ENCODE measurements at regions of chr17 and their contacts with region 1.

Region 1: GRCh38 chr17:48492401-48493298 is 38.2 kb downstream of the HOXB1 start:
- DNase-seq: no peak
- H3K4me3 ChIP-seq: peak overlapping the region; percentile 40 to 55 (median 44)
- H3K27ac ChIP-seq: peak overlapping the region; percentile 45 to 63 (median 52)
- H3K4me1 ChIP-seq: peaks cover 12 to 29% (median 18%) of the 10 kb centered on the region in 4 donors
- H3K27me3 ChIP-seq: no peaks in the 10 kb centered on the region
- CTCF ChIP-seq: peak in 2 of 3 experiments; percentile 92 to 95
- EP300 ChIP-seq: no peak
- POLR2A ChIP-seq: no peak

Region 2: GRCh38 chr17:48244121-48244711 is 248.4 kb before region 1 on chr17:
- intact Hi-C with region 1: no loop called
- DNase-seq: no peak
- H3K4me3 ChIP-seq: no peak overlapping the region
- H3K27ac ChIP-seq: no peak overlapping the region
- H3K4me1 ChIP-seq: peaks cover 23 to 26% (median 24%) of the 10 kb centered on the region in 4 donors
- H3K27me3 ChIP-seq: peaks cover 0 to 16% (median 2%) of the 10 kb centered on the region in 4 donors
- CTCF ChIP-seq: no peak
- EP300 ChIP-seq: no peak
- POLR2A ChIP-seq: no peak

Region 3: DNA sequence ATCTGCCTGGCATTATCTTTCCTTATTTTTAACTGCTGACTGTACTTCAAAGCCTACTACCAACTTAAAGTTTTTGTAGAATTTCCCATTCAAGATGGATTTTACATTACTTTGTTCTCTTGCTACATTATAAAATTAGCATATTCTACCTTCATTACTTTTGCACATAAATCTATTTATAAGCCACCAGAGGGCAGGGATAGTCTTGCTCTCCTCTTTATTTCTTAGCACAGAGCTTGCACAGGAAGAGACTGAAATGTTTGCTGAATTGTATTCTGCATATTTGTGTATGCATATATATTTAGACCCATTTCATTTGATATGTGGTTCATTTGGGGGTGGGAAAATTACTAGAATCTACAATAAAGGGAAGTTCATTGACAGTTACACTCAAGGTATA is 170.6 kb before region 1 on chr17:
- intact Hi-C with region 1: no loop called
- DNase-seq: no peak
- H3K4me3 ChIP-seq: no peak overlapping the region
- H3K27ac ChIP-seq: no peak overlapping the region
- H3K4me1 ChIP-seq: no peaks in the 10 kb centered on the region
- H3K27me3 ChIP-seq: peaks cover 0 to 52% (median 0%) of the 10 kb centered on the region in 4 donors
- CTCF ChIP-seq: no peak
- EP300 ChIP-seq: no peak
- POLR2A ChIP-seq: no peak

Region 4: DNA sequence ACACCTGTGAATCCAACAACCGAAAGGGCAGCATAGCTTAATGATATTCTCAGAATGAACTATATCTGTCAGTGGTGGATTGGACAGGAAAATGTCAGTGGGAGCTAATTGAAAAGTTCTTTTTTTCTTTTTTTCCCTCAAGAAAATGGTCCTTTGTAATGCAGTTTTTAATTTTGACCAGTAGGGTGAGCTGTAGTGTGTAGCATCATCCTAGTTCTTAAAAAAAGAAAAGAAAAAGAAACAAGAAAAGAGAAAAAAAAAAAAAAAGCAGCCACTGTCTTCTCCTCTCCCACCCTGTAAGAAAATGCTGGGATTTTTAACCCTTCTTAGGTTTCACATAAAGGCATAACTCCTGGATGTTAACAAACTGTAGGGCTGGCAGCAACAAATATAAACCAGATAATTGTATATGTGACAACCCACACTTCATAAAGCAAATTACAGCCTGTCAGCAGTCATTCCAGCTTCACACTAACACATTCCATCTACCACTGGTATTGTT is 140.8 kb before region 1 on chr17:
- intact Hi-C with region 1: loop called (anchors 5 kb)
- DNase-seq: no peak
- H3K4me3 ChIP-seq: no peak overlapping the region
- H3K27ac ChIP-seq: no peak overlapping the region
- H3K4me1 ChIP-seq: no peaks in the 10 kb centered on the region
- H3K27me3 ChIP-seq: peaks cover 0 to 40% (median 0%) of the 10 kb centered on the region in 4 donors
- CTCF ChIP-seq: peak; percentile 57 to 77 (median 67)
- EP300 ChIP-seq: no peak
- POLR2A ChIP-seq: no peak

Region 5: DNA sequence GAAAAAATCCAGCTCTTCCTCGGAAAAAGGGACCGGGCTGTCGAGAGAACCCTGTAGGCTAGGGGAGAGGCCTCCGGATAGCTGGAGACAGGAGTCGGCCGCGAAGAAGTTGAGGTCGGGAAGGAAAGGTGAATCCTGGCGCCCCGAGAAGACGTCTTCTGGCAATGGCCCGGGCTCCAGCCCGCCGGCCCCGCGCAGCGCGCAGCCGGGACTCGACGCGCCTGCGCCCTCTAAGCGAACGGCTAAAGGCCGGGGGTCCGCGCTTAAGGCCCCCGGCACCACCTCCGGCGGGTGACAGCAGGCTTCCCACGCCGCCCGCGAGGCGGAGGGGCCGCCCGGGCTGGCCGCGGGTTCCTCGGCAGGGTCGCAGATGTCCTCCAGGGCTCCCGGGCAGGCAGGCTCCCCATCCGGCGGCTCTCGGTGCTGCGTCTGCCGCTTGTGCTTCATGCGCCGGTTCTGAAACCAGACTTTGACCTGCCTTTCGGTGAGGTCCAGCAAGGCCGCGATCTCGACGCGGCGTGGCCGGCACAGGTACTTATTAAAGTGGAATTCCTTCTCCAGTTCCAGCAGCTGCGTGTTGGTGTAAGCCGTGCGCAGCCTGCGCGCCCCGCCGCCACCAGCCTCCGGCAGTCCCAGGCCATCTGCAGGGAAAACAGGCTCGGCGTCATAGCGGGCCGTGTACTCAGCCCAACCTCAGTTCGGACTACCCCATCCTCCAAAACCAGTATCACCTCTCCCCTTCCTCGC is 50.6 kb after region 1 on chr17:
- intact Hi-C with region 1: loop called (anchors 2 kb)
- DNase-seq: no peak
- H3K4me3 ChIP-seq: peak overlapping the region; percentile 79 to 89 (median 80)
- H3K27ac ChIP-seq: peak overlapping the region; percentile 91 to 97 (median 96)
- H3K4me1 ChIP-seq: peaks cover 38 to 53% (median 51%) of the 10 kb centered on the region in 4 donors
- H3K27me3 ChIP-seq: no peaks in the 10 kb centered on the region
- CTCF ChIP-seq: peak in 2 of 3 experiments; percentile 14 to 32
- EP300 ChIP-seq: no peak
- POLR2A ChIP-seq: no peak

Region 6: GRCh38 chr17:48601207-48601538 is 108.5 kb after region 1 on chr17:
- intact Hi-C with region 1: no loop called
- DNase-seq: no peak
- H3K4me3 ChIP-seq: no peak overlapping the region
- H3K27ac ChIP-seq: no peak overlapping the region
- H3K4me1 ChIP-seq: peaks cover 23 to 44% (median 34%) of the 10 kb centered on the region in 4 donors
- H3K27me3 ChIP-seq: peaks cover 18 to 100% (median 86%) of the 10 kb centered on the region in 4 donors
- CTCF ChIP-seq: no peak
- EP300 ChIP-seq: no peak
- POLR2A ChIP-seq: no peak

Measured in esophagus muscularis mucosa (tissue), 4 donors.